Esophagus squamous epithelium (tissue), 5 donors: ENCODE measurements at regions of chr10 and their contacts with region 1.

Region 1: GRCh38 chr10:52488606-52489485 is 174.8 kb downstream of the DKK1 start:
- DNase-seq: no peak
- H3K4me3 ChIP-seq: no peak overlapping the region
- H3K27ac ChIP-seq: no peak overlapping the region
- H3K4me1 ChIP-seq: no peaks in the 10 kb centered on the region
- H3K27me3 ChIP-seq: no peaks in the 10 kb centered on the region
- CTCF ChIP-seq: peak in 5 of 6 experiments; percentile 45 to 73 (median 52)
- POLR2A ChIP-seq: no peak

Region 2: DNA sequence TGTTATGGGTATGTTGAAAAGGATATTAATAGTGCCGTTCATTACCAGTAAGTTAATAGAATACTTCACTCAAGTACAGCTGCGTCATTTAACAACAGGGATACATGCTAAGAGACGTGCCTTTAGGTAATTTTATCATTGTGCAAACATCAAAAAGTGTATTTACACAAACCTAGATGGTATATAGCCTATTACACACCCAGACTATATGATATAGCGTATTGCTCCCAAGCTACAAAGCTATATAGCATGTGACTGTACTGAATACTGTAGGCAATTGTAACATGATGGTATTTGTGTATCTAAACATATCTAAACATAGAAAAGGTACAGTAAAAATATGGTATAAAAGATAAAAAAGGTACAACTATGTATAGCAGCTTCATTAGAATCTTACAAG is 1425.7 kb before region 1 on chr10:
- intact Hi-C with region 1: no loop called
- DNase-seq: no peak
- H3K4me3 ChIP-seq: no peak overlapping the region
- H3K27ac ChIP-seq: no peak overlapping the region
- H3K4me1 ChIP-seq: no peaks in the 10 kb centered on the region
- H3K27me3 ChIP-seq: no peaks in the 10 kb centered on the region
- CTCF ChIP-seq: no peak
- POLR2A ChIP-seq: no peak

Region 3: DNA sequence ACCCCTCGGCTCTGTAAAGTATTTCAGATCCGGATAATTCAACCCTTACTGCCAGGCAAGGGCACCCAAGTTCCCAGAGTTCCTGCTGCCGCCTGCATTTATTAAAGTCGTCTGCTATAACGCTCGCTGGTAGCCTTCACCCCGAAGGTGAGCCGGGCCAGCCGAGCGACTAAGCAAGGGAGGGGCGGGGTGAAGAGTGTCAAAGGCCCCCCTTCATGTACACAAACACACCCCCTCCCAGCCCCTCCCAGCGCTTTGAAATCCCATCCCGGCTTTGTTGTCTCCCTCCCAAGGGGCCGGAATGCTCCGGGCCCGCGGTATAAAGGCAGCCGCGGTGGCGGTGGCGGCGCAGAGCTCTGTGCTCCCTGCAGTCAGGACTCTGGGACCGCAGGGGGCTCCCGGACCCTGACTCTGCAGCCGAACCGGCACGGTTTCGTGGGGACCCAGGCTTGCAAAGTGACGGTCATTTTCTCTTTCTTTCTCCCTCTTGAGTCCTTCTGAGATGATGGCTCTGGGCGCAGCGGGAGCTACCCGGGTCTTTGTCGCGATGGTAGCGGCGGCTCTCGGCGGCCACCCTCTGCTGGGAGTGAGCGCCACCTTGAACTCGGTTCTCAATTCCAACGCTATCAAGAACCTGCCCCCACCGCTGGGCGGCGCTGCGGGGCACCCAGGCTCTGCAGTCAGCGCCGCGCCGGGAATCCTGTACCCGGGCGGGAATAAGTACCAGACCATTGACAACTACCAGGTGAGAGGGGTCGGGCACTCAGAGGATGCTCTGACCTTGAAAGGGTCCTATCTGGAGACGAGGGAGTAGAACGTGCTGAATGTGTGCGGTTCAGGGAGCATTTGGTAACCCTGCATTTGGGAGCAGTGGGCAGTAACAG is 174.7 kb before region 1 on chr10 and contains the start of gene DKK1:
- intact Hi-C with region 1: loop called (anchors 5 kb)
- DNase-seq: no peak
- H3K4me3 ChIP-seq: peak within 1 kb of the TSS; percentile 47 to 61 (median 54)
- H3K27ac ChIP-seq: no peak within 1 kb of the TSS
- H3K4me1 ChIP-seq: peaks cover 7 to 25% (median 11%) of the 10 kb centered on the region in 3 donors
- H3K27me3 ChIP-seq: peaks cover 0 to 72% (median 0%) of the 10 kb centered on the region in 4 donors
- CTCF ChIP-seq: peak in 5 of 6 experiments; percentile 63 to 91 (median 68)
- POLR2A ChIP-seq: no peak
- total RNA-seq, gene DKK1: 0.19 to 2.6 (median 0.59) TPM